OCI-LY7 (cell line): ENCODE measurements at regions of chr17 and their contacts with region 1.

Region 1: GRCh38 chr17:57357399-57357807 is 101.1 kb downstream of the MSI2 start:
- DNase-seq: peak; percentile 74
- H3K4me3 ChIP-seq: peak overlapping the region; percentile 62
- H3K27ac ChIP-seq: peak overlapping the region; percentile 100
- H3K4me1 ChIP-seq: peaks cover 98% of the 10 kb centered on the region
- CTCF ChIP-seq: no peak

Region 2: DNA sequence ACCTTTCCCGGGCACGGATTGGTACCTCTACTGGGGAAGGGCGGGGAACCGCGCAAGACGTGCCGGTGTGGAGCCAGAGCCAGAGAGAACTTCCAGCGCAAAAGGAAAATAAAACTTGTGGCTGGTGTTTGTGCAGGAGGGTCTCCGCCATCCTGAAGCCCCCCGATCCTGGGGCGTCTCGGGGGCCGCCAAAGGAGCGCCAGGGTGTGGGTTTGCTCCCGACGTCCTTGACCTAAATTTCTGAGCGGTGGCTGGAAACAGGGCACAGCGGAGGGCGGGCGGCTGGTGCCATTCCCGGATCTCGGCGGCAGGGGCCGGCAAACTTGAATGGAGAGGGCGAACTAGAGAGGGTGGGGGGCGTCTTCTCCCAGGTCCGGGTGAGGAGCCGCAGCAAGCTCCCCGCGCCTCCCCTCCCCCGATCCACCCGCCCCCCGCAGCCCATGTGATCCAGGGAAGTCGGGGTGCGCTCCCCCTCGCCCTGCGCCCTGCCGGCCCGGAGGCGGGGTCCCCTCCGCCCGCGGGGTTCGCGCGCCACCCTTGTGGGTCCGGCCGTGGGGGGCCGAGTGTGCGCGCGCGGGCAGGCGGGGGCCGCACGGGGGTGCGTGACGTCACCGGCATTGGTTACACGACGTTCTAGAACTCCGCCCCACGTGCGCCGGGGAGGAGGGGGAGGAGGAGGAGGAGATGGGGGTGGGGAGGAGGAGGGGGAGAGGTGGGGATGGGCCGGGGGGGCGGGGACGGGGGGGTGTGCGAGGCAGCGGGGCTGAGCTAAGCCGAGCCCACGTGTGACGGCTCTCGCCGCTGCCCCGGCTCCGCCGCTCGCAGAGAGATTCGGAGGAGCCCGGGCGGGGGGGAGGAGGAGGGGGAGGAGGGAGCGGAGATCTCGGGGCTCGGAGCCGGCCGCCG is 101.4 kb before region 1 on chr17 and contains the start of gene MSI2:
- CTCF ChIA-PET with region 1: interaction called, 3 read pairs
- POLR2A ChIA-PET with region 1: interaction called, 20 read pairs
- intact Hi-C with region 1: loop called (anchors 1 kb)
- DNase-seq: peak; percentile 89
- H3K4me3 ChIP-seq: peak within 1 kb of the TSS; percentile 81
- H3K27ac ChIP-seq: peak within 1 kb of the TSS; percentile 76
- H3K4me1 ChIP-seq: peaks cover 26% of the 10 kb centered on the region
- CTCF ChIP-seq: no peak
- total RNA-seq, gene MSI2: 131 and 226 TPM in 2 replicates

Region 3: GRCh38 chr17:57278740-57279387 is 78.5 kb before region 1 on chr17:
- CTCF ChIA-PET with region 1: no interaction called
- POLR2A ChIA-PET with region 1: no interaction called
- intact Hi-C with region 1: no loop called
- DNase-seq: no peak
- H3K4me3 ChIP-seq: no peak overlapping the region
- H3K27ac ChIP-seq: no peak overlapping the region
- H3K4me1 ChIP-seq: peaks cover 14% of the 10 kb centered on the region
- CTCF ChIP-seq: no peak

Region 4: DNA sequence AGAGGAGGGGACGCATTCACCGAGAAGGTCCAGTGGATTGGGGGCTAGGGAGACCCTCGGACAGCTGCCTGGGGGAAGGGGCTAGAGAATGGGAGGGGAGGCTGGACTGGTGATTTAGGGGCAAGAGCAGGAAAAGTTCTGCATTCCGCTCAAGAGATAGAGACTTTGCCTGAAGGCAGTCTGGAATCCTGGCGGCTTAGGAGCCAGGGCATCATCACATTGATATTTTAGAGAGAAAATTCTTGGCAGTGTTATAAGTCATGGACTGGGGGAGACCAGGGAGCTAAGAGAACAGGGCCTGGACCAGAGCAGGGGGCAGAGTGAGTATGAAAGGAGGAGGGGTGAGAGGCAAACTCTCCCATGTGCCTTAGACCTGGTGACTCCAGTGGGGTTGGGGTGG is 65.3 kb before region 1 on chr17:
- CTCF ChIA-PET with region 1: no interaction called
- POLR2A ChIA-PET with region 1: no interaction called
- intact Hi-C with region 1: no loop called
- DNase-seq: no peak
- H3K4me3 ChIP-seq: no peak overlapping the region
- H3K27ac ChIP-seq: no peak overlapping the region
- H3K4me1 ChIP-seq: peaks cover 3% of the 10 kb centered on the region
- CTCF ChIP-seq: no peak

Region 5: GRCh38 chr17:57370037-57370581 is 12.7 kb after region 1 on chr17:
- CTCF ChIA-PET with region 1: interaction called, 3 read pairs
- POLR2A ChIA-PET with region 1: interaction called, 43 read pairs
- intact Hi-C with region 1: no loop called
- DNase-seq: no peak
- H3K4me3 ChIP-seq: no peak overlapping the region
- H3K27ac ChIP-seq: no peak overlapping the region
- H3K4me1 ChIP-seq: peaks cover 49% of the 10 kb centered on the region
- CTCF ChIP-seq: no peak

Region 6: DNA sequence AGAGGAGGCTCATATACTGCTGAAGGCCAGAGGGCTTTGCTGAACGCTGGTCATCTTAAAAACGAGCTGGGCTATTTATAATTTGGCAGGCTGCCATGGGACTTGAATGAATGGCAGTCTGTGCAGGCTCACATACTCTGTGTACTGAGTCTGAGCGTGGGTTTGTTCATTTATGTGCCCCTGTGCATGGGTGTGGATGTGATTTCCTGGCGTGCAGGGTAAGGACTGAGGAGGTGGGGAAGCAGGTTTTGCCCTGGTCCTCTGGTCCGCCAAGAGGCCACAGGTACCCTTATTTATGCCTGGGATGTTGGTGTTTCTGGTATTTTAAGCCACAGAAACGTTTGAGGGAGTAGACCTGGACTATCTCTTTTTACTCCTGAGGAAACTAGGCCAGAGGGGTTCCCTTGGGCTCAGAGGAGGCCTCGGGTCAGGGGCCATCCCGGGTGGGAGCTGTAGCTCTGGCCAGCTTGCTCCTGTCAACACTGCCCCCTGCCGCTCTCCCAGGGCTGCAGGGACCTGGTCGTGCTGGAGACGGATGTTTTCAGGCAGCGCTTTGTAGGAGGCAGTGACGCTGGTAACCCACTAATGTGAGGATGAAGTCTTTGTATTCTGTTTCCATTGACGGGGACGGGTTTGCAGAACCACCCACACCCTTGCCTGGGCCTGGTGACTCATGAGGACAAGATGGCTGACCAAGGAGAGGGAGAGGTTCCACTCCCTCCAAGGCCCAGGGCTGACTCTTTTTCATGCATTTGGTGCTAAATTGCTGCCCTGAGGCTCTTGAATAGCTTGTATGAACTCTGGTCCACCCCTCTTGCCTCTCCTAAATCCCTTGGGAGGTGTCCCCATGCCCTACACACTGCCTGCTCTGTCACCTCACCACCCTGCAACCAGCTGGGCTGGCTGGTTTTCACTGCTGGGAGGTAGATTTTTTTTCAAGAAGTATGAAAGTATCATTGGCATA is 83.4 kb after region 1 on chr17:
- CTCF ChIA-PET with region 1: interaction called, 7 read pairs
- POLR2A ChIA-PET with region 1: no interaction called
- intact Hi-C with region 1: loop called (anchors 2 kb)
- DNase-seq: peak; percentile 66
- H3K4me3 ChIP-seq: no peak overlapping the region
- H3K27ac ChIP-seq: peak overlapping the region; percentile 82
- H3K4me1 ChIP-seq: peaks cover 62% of the 10 kb centered on the region
- CTCF ChIP-seq: peak; percentile 78

Region 7: DNA sequence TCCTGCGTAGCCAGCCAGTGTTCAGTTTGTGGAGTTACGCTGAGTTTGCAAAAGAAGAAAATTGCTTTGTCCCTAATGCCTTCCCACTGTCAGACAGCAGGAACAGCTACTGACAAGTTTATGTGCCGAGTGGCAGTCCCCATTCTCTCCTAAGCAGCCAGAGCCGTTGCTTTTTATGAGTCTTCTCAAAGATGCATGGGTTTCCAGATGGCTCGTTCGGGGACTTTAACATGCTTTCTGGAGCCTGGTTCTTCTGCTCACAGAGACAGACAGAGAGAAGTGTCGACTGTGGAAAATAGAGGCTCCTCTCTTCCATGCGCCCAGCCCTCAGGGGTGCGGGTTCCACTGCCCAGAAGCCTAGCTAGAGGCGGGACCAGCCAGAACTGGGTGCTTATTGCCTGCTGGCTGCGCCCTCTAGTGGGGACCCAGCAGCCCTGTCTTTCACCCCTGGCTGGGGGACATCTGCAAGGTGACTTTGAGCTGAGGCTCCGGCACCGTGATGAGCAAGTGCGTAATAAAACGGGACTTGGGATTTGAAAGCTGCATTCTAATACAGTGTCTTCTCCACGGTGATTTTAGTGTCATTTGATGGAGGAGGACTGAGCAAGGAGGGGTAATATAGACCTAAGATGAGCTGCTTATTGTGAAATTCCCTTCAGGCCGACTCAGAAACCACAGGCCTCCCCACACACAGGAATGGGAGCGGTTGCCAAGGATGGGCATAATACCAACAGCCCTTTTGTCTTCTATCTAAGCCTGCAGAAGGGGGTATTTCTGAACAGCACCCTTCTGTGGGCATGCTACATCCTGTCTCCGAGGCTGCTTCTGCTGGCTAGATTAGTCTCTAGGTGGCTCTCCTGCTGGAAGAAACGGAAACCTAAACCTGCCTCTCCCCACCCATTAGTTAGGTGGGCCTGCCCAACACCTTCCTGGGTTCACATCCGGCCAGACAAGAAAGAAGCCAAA is 314.5 kb after region 1 on chr17:
- CTCF ChIA-PET with region 1: no interaction called
- POLR2A ChIA-PET with region 1: no interaction called
- intact Hi-C with region 1: loop called (anchors 2 kb)
- DNase-seq: peak; percentile 88
- H3K4me3 ChIP-seq: peak overlapping the region; percentile 5
- H3K27ac ChIP-seq: peak overlapping the region; percentile 57
- H3K4me1 ChIP-seq: peaks cover 26% of the 10 kb centered on the region
- CTCF ChIP-seq: peak; percentile 97